Activated T-helper 2 cell treated with anti-CD3 and anti-CD28 coated beads, Interferon-gamma antibody, Interleukin-2, Interleukin-4, amounts not matched to agents 10 μg/mL and 5 μg/mL and 100 μg/mL, durations not matched to agents 14 hours and 24 hours and 36 hours (primary cell): ENCODE measurements at regions of chr1 and their contacts with region 1.

Region 1: DNA sequence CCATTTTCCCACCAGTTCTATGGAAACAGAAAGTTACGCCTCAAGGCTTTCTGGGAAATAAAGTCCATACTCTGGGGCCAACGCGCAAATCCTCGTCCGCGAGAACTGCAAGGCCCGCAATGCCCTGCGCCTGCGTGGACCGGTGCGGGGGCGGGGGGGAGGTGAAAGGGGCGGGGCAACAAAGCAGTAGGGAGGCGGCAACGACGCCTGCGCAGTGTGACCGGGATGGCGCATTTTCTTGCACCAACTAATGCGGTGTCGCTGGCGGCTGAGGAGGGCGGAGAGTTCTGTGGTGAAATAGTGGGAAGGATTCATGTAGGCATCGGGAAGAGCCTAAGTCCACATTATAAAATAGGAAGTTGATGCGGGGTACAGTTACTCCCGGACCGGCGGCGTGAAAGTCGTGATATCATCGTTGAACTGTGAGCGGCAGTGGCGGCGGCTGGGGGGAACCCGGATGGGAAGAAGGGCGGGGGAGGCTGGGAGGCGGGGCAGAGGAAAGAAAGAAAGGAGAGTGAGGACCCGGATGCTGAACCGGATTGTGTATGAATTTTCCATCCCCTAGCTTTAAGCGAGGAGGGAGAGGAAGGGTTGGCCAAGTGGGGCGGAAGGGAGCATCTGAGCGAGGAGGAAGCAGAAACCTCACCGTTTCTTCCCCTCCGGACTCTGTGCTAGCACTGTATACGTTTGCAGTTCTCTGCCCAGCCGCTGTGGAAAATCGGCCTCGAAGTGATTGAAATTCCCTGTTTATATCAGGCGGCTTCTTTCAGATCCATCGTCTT is at the start of gene GGPS1:
- DNase-seq: peak; percentile 94
- H3K4me3 Mint-ChIP-seq: no peak within 1 kb of the TSS
- H3K27ac Mint-ChIP-seq: peak within 1 kb of the TSS; percentile 88
- H3K4me1 Mint-ChIP-seq: peaks cover 39% of the 10 kb centered on the region
- H3K27me3 Mint-ChIP-seq: no peaks in the 10 kb centered on the region
- total RNA-seq, gene GGPS1: 30.4 and 33.7 TPM in 2 replicates

Region 2: GRCh38 chr1:234373064-234373958 is 955.2 kb before region 1 on chr1 and contains the start of gene COA6:
- intact Hi-C with region 1: loop called (anchors 1 kb)
- DNase-seq: peak; percentile 86
- H3K4me3 Mint-ChIP-seq: peak within 1 kb of the TSS; percentile 94
- H3K27ac Mint-ChIP-seq: peak within 1 kb of the TSS; percentile 99
- H3K4me1 Mint-ChIP-seq: peaks cover 47% of the 10 kb centered on the region
- H3K27me3 Mint-ChIP-seq: no peaks in the 10 kb centered on the region
- total RNA-seq, gene COA6: 60.3 and 63.6 TPM in 2 replicates

Region 3: DNA sequence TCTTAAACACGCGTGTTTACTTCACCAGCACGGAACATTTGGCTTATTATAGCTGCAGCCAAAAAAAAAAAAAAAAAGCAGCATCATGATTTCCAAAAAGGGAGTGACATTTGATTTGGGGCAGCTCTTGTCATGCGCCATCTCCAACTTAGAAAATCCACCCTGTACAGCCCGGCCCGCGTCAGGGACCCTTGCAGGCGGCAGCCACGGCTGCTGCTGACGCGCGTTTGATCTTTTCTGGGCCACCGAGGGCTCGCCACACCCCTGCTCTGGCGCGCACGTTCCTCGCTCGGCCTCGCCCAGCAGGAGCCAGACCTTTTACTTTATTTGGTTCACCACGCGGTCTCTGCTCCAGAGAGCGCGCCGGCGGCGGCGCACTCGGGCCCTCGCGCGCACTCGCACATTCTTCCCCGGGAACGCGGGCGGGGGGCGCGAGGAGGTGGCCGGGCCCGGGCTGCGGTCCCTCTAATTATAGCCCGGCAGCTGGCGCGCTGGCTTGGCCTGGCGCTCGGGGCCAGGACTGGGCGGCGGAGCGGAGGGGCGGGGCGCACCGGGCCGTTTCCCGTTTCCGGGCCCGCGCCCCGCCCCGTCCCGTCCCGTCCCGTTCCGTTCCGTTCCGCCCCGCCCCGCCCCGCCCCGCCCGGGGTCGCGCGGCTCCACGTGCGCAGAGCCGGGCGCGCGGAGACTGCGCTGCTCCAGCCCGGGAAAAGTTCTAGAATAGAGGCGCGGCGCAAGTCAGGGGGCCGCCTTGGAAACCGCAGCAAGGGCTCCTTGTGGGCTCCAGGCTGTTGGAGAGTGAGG is 728.7 kb before region 1 on chr1:
- intact Hi-C with region 1: loop called (anchors 5 kb)
- DNase-seq: peak; percentile 70
- H3K4me3 Mint-ChIP-seq: peak overlapping the region; percentile 82
- H3K27ac Mint-ChIP-seq: peak overlapping the region; percentile 92
- H3K4me1 Mint-ChIP-seq: peaks cover 53% of the 10 kb centered on the region
- H3K27me3 Mint-ChIP-seq: no peaks in the 10 kb centered on the region

Region 4: GRCh38 chr1:235160957-235161684 is 167.4 kb before region 1 on chr1 and contains the start of gene RBM34:
- intact Hi-C with region 1: loop called (anchors 1 kb)
- DNase-seq: peak; percentile 91
- H3K4me3 Mint-ChIP-seq: peak within 1 kb of the TSS; percentile 99
- H3K27ac Mint-ChIP-seq: peak within 1 kb of the TSS; percentile 97
- H3K4me1 Mint-ChIP-seq: peaks cover 13% of the 10 kb centered on the region
- H3K27me3 Mint-ChIP-seq: no peaks in the 10 kb centered on the region
- total RNA-seq, gene RBM34: 122 and 125 TPM in 2 replicates

Region 5: DNA sequence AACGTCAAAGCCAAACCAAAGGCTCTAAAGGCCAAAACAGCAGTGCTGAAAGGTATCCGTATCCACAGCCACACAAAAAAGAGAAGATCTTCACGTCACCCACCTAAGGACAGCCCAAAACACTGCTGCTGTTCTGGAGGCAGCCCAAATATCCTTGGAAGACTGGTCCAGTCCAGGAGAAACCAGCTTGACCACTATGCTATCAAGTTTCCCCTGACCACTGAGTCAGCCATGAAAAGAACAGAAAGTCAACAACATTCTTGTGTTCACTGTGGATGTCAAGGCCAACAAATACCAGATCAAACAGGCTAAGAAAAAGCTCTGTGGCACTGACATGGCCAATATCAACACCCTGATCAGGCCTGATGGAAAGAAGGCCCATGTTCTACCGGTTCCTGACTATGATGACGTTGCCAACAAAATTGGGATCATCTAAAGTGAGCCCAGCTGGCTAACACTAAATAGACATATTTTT is 32.6 kb before region 1 on chr1:
- intact Hi-C with region 1: loop called (anchors 1 kb)
- DNase-seq: no peak
- H3K4me3 Mint-ChIP-seq: no peak overlapping the region
- H3K27ac Mint-ChIP-seq: no peak overlapping the region
- H3K4me1 Mint-ChIP-seq: peaks cover 34% of the 10 kb centered on the region
- H3K27me3 Mint-ChIP-seq: no peaks in the 10 kb centered on the region

Region 6: GRCh38 chr1:235367000-235367908 is 38.7 kb after region 1 on chr1 and contains the start of gene TBCE:
- intact Hi-C with region 1: loop called (anchors 1 kb)
- DNase-seq: peak; percentile 85
- H3K4me3 Mint-ChIP-seq: peak within 1 kb of the TSS; percentile 97
- H3K27ac Mint-ChIP-seq: peak within 1 kb of the TSS; percentile 82
- H3K4me1 Mint-ChIP-seq: peaks cover 26% of the 10 kb centered on the region
- H3K27me3 Mint-ChIP-seq: no peaks in the 10 kb centered on the region
- total RNA-seq, gene TBCE: 25.0 and 28.2 TPM in 2 replicates

Region 7: DNA sequence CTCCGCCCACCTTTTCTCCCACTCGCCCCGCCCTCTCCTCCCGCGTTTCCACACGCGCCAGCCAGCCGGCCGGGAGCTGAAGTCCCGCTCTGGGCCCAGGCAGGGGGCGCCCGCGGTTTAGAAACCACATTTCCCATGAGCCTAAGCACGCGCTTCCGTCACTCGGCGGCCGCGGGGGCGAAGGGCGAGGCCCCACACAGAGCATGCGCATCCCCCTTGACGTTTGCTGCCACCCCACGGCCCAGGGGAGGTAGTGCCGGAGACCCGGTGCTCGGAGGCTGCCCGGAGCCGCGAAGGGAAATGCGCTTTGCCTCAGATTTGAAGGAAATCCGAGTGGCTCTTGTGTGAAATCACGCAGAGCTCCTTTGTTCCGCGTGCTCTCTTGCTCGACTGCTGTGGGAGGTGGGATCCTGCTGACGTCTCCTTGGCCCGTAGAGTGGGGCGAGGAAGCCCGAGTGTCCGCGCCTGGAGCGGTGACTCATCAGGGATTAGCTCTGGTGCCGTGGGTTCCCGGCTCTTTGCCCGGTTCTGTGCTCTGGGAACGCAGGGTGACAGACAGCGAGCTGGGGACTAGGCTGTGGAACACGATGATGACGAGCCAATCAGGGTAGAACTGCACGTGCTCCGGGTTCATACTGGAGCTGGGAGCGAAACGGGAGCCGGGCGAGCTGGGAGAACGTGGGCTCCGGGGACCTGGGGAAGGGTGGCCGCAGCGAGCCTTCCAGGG is 176.1 kb after region 1 on chr1:
- intact Hi-C with region 1: loop called (anchors 1 kb)
- DNase-seq: peak; percentile 98
- H3K4me3 Mint-ChIP-seq: peak overlapping the region; percentile 94
- H3K27ac Mint-ChIP-seq: peak overlapping the region; percentile 92
- H3K4me1 Mint-ChIP-seq: peaks cover 32% of the 10 kb centered on the region
- H3K27me3 Mint-ChIP-seq: peaks cover 6% of the 10 kb centered on the region